GM10248 (cell line): ENCODE measurements at regions of chr4 and their contacts with region 1.

Region 1: DNA sequence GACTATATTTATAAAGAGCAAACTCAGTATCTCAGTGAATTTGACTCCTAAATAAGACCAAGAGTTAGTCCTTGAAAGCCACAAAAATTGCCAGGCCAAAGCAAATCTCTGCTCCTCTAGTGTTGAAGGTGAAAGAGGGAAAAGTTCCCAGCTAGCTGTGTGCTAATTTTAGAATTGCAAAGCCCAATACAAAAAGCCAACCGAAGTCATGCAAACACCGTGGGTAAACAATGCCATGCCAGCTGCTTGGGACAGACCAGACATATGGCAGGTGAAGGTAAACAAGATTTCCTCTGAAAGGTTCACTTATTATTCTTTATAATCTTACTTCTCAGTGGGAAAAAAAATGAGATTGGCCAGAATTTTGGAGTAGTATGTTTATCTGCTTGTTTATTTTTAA is 80.5 kb upstream of the LNX1 start:
- DNase-seq: no peak
- CTCF ChIP-seq: no peak

Region 2: GRCh38 chr4:53659737-53660136 is 12.0 kb before region 1 on chr4:
- CTCF ChIA-PET with region 1: interaction called, 13 read pairs
- POLR2A ChIA-PET with region 1: no interaction called
- DNase-seq: no peak
- CTCF ChIP-seq: no peak

Region 3: DNA sequence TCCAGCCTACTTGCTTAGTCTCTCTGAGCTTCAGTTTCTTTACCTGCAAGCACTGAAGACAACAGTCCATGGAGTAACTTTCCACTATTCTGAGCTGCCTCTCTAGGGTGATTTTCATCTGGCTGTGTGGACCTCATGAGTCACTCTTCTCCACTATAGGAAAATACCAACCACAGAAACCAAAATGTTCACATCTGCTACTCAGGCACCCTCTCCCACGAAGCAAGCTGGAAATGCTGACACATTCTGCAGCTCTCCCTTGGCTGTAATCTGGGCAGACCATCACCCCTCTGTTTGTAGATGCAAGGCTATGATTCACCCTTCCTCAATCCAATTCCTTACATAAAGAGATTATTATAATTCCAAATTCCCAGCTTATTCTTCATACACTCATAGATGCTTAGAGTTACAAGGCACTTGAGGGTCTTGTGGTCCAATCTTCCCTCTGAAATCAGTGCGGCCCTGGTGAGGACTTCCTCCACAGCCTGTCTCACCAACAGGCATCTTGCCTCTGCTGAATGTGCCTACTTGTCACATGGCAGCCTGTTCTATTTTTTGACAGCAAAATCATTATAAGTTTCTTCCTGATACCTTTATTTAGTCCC is 16.5 kb after region 1 on chr4:
- CTCF ChIA-PET with region 1: interaction called, 12 read pairs
- POLR2A ChIA-PET with region 1: no interaction called
- DNase-seq: peak; percentile 26
- CTCF ChIP-seq: no peak

Region 4: DNA sequence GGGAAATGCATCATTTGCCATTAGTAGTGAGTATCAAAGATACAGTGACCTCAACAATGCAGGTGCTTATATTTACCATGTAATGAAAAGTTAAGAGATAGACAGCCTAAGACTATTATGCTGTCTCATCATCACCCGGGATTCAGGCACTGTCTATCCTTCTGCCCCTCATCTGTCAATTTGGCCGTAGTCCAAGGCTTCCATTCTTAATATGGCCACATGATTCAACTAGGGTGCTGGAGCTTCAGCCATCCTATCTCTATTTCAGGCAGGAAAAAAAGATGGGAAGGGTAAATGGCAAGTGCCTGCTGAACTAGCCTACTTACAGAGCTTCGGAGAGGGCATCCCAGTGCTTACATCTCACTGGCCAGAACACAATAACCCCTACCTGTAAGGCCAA is 116.3 kb after region 1 on chr4:
- CTCF ChIA-PET with region 1: no interaction called
- POLR2A ChIA-PET with region 1: no interaction called
- DNase-seq: no peak
- CTCF ChIP-seq: no peak